ENCODE measurements at regions of chr21 and their contacts with region 1.

Region 1: DNA sequence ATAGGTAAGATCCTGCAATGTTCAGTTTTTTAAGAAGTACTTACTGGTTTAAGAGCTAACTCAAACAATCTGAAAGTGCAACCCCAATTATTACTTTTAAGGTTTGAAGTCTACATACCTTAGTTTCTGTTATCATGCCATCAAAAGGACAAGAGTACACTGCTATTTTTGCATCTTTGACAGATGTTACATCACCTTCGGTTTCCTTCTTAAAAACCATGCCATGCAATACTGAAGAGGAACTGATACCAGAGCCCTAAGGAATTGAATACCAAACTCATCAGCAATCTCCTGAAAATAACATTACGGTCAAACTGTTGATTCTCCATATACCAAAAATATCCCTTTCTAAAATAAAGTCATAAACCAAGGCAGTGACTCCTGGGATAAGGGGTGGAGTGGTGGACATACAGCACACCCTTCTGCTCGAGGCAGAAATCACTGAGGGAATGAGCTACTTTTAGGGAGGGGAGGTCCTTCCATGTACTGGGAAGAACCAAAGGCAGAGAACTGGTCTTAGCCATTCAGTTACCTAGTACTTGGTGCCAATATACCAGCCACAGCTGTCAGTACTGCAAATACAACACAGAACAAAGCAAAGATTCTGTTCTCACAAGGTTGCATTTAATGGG is 8.5 kb downstream of the CCT8 start:
- DNase-seq: no peak
- ATAC-seq: peak in 2 of 8 donors; percentile 20 to 42
- H3K4me3 ChIP-seq: no peak overlapping the region
- H3K27ac ChIP-seq: no peak overlapping the region
- H3K4me1 ChIP-seq: peaks cover 0 to 16% (median 7%) of the 10 kb centered on the region in 9 donors
- H3K27me3 ChIP-seq: no peaks in the 10 kb centered on the region
- CTCF ChIP-seq: no peak

Region 2: GRCh38 chr21:28959367-28960099 is 105.4 kb before region 1 on chr21:
- intact Hi-C with region 1: loop called in 1 of 10 experiments (anchors 10 kb)
- DNase-seq: no peak
- ATAC-seq: no peak
- H3K4me3 ChIP-seq: no peak overlapping the region
- H3K27ac ChIP-seq: no peak overlapping the region
- H3K4me1 ChIP-seq: peaks cover 0 to 8% (median 0%) of the 10 kb centered on the region in 9 donors
- H3K27me3 ChIP-seq: no peaks in the 10 kb centered on the region
- CTCF ChIP-seq: no peak

Region 3: GRCh38 chr21:28975397-28975796 is 89.6 kb before region 1 on chr21:
- intact Hi-C with region 1: loop called in 1 of 10 experiments (anchors 10 kb)
- DNase-seq: no peak
- ATAC-seq: peak in 4 of 8 donors; percentile 37 to 59 (median 43)
- H3K4me3 ChIP-seq: no peak overlapping the region
- H3K27ac ChIP-seq: peak overlapping the region in 2 of 10 donors; percentile 10 to 17
- H3K4me1 ChIP-seq: peaks cover 0 to 24% (median 6%) of the 10 kb centered on the region in 9 donors
- H3K27me3 ChIP-seq: no peaks in the 10 kb centered on the region
- CTCF ChIP-seq: no peak

Region 4: GRCh38 chr21:29418813-29419212 is 353.8 kb after region 1 on chr21:
- intact Hi-C with region 1: no loop called
- DNase-seq: no peak
- ATAC-seq: no peak
- H3K4me3 ChIP-seq: no peak overlapping the region
- H3K27ac ChIP-seq: no peak overlapping the region
- H3K4me1 ChIP-seq: no peaks in the 10 kb centered on the region
- H3K27me3 ChIP-seq: no peaks in the 10 kb centered on the region
- CTCF ChIP-seq: no peak

Measured in heart right ventricle (tissue), 16 donors.